ENCODE measurements at regions of chr9 and their contacts with region 1.

Region 1: GRCh38 chr9:26157411-26157810 is 479.2 kb upstream of the TUSC1 start:
- DNase-seq: no peak
- ATAC-seq: no peak
- H3K4me3 ChIP-seq: no peak overlapping the region
- H3K27ac ChIP-seq: no peak overlapping the region
- H3K4me1 ChIP-seq: peaks cover 3% of the 10 kb centered on the region; the same call in 1 of the 2 replicates
- H3K27me3 ChIP-seq: no peaks in the 10 kb centered on the region
- CTCF ChIP-seq: no peak
- POLR2A ChIP-seq: no peak
- RAD21 ChIP-seq: no peak

Region 2: GRCh38 chr9:26086396-26086795 is 71.0 kb before region 1 on chr9:
- CTCF ChIA-PET with region 1: no interaction called
- POLR2A ChIA-PET with region 1: no interaction called
- dilution Hi-C with region 1: no loop called
- in situ Hi-C with region 1: loop called (anchors 10 kb)
- intact Hi-C with region 1: no loop called
- DNase-seq: no peak
- ATAC-seq: no peak
- H3K4me3 ChIP-seq: no peak overlapping the region
- H3K27ac ChIP-seq: no peak overlapping the region
- H3K4me1 ChIP-seq: no peaks in the 10 kb centered on the region
- H3K27me3 ChIP-seq: no peaks in the 10 kb centered on the region
- CTCF ChIP-seq: no peak
- POLR2A ChIP-seq: no peak
- RAD21 ChIP-seq: no peak